ENCODE measurements at regions of chr2 and their contacts with region 1.

Region 1: GRCh38 chr2:120436885-120437603 is 91.1 kb downstream of the INHBB start:
- DNase-seq: no peak
- ATAC-seq: no peak
- H3K4me3 Mint-ChIP-seq: no peak overlapping the region
- H3K27ac Mint-ChIP-seq: no peak overlapping the region
- H3K4me1 Mint-ChIP-seq: no peaks in the 10 kb centered on the region
- H3K27me3 Mint-ChIP-seq: peaks cover 30% of the 10 kb centered on the region
- CTCF ChIP-seq: no peak

Region 2: DNA sequence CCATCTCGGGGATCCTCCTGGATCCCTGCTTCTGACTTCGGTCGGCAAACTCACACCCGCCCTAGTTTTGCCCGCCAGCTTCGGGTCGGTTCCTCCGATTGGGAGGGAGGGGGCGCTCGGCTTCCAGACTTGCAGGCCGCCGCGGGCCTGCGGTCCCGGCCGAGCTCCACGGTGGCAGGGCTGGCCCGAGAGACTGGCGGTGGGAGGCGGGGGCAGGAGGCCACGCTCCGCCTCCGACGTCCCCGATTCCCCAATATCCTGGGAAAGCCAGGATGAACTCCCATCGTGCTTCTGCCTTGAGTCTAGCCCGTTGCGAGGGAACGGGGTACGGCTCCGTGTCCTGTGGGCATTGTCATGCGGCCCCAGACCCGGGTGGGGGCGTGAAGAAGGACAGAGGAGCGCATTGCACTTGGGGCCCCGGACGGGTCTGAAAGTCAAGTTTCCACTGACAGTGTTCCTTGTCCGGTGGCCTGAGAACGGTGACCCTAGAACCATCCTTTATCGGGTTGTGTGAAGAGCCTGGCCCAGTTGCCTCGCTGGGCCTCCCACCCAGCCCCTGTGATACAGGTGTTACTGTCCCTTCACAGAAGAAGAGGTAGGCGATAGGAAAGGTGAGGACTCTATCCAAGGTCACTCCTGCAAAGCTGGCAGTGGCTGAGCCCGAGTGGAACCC is 93.5 kb before region 1 on chr2:
- CTCF ChIA-PET with region 1: no interaction called
- POLR2A ChIA-PET with region 1: no interaction called
- intact Hi-C with region 1: loop called (anchors 1 kb)
- DNase-seq: peak; percentile 27
- ATAC-seq: peak; percentile 52
- H3K4me3 Mint-ChIP-seq: peak overlapping the region; percentile 55
- H3K27ac Mint-ChIP-seq: no peak overlapping the region
- H3K4me1 Mint-ChIP-seq: peaks cover 28% of the 10 kb centered on the region
- H3K27me3 Mint-ChIP-seq: peaks cover 58% of the 10 kb centered on the region
- CTCF ChIP-seq: no peak

Region 3: GRCh38 chr2:121400201-121400600 is 963.2 kb after region 1 on chr2:
- CTCF ChIA-PET with region 1: no interaction called
- POLR2A ChIA-PET with region 1: no interaction called
- intact Hi-C with region 1: no loop called
- DNase-seq: no peak
- ATAC-seq: no peak
- H3K4me3 Mint-ChIP-seq: no peak overlapping the region
- H3K27ac Mint-ChIP-seq: no peak overlapping the region
- H3K4me1 Mint-ChIP-seq: peaks cover 2% of the 10 kb centered on the region
- H3K27me3 Mint-ChIP-seq: no peaks in the 10 kb centered on the region
- CTCF ChIP-seq: no peak